CD8-positive, alpha-beta T cell (primary cell): ENCODE measurements at regions of chr1 and their contacts with region 1.

Region 1: DNA sequence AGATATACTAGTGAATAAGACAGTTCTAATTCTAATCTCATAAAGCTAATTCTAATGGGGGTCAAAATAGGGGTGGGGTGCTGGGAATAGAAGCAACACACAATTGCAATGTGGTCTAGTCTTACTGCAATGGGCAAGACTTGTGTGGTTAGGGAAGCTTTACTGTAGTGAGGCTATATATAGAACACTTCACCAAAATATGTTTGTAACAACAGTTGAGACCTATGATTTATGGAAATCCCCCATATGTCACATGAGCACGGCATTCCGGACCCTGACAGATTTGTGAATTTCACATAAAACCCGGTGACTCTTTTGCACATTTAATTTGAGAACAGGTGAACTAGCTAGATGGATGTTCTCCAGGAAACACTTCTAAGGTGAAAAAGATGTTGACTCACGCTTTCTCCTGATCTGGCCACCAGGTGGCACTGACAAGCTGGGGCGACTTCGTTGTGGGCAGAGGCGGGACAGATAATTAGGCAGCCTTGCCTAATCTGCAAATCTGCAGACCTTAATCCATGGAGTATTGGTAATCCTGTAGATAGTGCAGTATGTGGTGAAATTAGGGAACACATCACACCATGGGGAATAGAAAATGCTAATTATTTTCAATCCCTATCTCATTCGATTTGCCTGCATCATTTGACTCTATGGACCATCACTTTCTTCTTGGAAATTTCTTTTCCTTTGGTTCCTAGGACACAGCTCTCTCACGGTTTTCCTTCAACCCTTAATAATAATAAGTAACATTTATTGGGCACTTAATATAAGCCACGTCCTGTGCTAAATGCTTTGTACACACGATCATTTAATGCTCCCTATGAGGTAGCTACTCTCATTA is 37.7 kb downstream of the KIAA0040 start:
- DNase-seq: peak; percentile 60 to 88 (median 77)
- ATAC-seq: peak; percentile 65
- H3K4me3 ChIP-seq: no peak overlapping the region
- H3K4me3 Mint-ChIP-seq: no peak overlapping the region
- H3K27ac ChIP-seq: no peak overlapping the region
- H3K27ac Mint-ChIP-seq: no peak overlapping the region
- H3K4me1 ChIP-seq: peaks cover 13% of the 10 kb centered on the region
- H3K4me1 Mint-ChIP-seq: peaks cover 20% of the 10 kb centered on the region
- H3K27me3 ChIP-seq: peaks cover 0 to 6% of the 10 kb centered on the region in 2 experiments
- H3K27me3 Mint-ChIP-seq: peaks cover 26% of the 10 kb centered on the region
- CTCF ChIP-seq: peak; percentile 83

Region 2: DNA sequence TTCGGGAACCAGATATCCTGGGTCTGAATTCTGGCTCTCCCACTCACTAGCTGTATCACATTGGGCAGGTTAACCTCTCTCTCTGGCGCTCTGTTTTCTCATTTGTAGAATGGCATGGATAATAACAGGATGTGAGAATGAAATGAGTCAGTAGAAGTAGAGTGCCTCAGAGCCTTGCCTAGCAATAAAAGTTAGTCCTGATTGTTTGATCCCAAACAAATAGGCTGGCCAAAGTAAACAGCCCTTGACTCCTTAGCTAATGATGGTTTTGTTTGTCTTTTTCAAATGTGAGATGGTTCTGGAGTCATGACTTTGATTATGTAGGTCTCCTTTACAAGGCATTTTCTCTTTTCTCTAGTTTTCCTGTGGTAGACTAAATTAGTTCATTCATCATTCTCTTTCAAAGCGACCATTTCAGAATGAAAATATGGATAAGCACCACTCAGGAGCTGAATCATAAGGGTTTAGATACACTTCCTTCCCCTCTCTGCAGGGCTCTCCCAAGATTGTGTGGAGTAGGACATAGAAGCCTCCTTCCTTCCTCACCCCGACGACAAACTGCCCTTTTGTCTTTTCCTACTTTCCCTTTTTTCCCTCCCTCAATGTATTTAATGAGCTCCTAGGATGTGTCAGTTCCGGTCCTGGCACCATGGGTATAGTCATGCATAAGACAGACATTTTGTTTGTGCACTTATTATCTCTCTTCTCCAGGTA is 14.6 kb after region 1 on chr1:
- CTCF ChIA-PET with region 1: interaction called, 22 read pairs
- POLR2A ChIA-PET with region 1: interaction called, 3 read pairs
- intact Hi-C with region 1: no loop called
- DNase-seq: no peak
- ATAC-seq: no peak
- H3K4me3 ChIP-seq: no peak overlapping the region
- H3K4me3 Mint-ChIP-seq: no peak overlapping the region
- H3K27ac ChIP-seq: no peak overlapping the region
- H3K27ac Mint-ChIP-seq: peak overlapping the region; percentile 74
- H3K4me1 ChIP-seq: peaks cover 4% of the 10 kb centered on the region
- H3K4me1 Mint-ChIP-seq: peaks cover 69% of the 10 kb centered on the region
- H3K27me3 ChIP-seq: no peaks in the 10 kb centered on the region
- H3K27me3 Mint-ChIP-seq: no peaks in the 10 kb centered on the region
- CTCF ChIP-seq: no peak

Region 3: DNA sequence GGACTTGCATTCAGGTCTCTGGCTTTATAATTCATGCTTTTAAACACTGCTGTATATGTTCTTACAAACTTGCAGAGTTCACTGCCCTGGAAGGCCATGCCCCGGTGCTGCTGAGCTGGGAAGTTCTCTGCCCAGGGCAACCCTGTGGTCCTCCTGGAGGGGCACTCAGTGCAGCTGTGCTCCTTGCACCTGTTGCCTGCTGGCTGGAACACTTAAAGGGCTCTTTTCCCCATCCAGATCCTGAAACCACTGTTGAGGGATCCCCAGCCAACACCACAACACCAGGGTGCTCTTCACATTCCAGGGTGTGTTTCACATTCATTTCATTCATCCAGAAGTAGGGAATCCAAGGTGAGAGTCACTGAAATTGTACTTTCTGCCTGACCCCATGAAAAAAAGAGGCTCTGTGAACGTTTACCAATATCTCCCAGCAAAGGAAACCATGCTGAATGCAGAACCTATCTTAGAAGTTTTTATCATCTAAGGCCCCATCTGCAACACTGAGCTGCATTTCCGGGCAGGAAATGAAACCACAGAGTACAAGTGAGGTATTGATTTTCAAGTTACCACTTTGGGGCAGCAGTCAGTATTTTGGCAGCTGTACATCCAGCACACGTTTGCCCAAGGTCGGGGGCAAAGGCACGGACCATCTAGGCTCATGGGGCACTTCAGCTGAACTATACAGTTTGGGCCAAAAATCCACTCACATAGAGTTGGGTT is 54.1 kb after region 1 on chr1:
- CTCF ChIA-PET with region 1: interaction called, 16 read pairs
- POLR2A ChIA-PET with region 1: interaction called, 5 read pairs
- intact Hi-C with region 1: loop called in 1 of 2 experiments (anchors 5 kb)
- DNase-seq: peak; percentile 10 to 87 (median 61)
- ATAC-seq: peak; percentile 87
- H3K4me3 ChIP-seq: peak overlapping the region; percentile 26 to 36
- H3K4me3 Mint-ChIP-seq: peak overlapping the region; percentile 82
- H3K27ac ChIP-seq: peak overlapping the region; percentile 41 to 78
- H3K27ac Mint-ChIP-seq: peak overlapping the region; percentile 95
- H3K4me1 ChIP-seq: peaks cover 55% of the 10 kb centered on the region
- H3K4me1 Mint-ChIP-seq: peaks cover 77% of the 10 kb centered on the region
- H3K27me3 ChIP-seq: no peaks in the 10 kb centered on the region
- H3K27me3 Mint-ChIP-seq: no peaks in the 10 kb centered on the region
- CTCF ChIP-seq: no peak

Region 4: DNA sequence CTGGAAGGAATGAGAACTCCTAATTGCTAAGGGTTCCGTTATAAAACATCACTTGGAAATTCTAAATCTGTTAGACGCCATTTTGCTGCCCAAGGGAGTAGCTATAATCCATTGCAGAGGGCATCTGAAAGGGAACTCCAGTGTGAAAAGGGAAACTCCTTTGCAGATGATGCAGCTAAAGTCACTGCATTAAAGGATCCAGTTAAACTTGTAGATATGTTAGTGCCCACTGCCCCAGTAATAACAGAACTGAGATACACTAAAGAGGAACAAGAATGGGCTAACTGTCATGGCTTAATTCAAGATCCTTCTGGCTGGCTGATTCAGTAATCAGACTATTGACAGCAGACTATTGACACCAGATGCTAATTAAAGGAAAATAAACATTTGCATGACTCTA is 119.5 kb after region 1 on chr1:
- CTCF ChIA-PET with region 1: interaction called, 13 read pairs
- POLR2A ChIA-PET with region 1: no interaction called
- intact Hi-C with region 1: no loop called
- DNase-seq: no peak
- ATAC-seq: no peak
- H3K4me3 ChIP-seq: no peak overlapping the region
- H3K4me3 Mint-ChIP-seq: no peak overlapping the region
- H3K27ac ChIP-seq: no peak overlapping the region
- H3K27ac Mint-ChIP-seq: no peak overlapping the region
- H3K4me1 ChIP-seq: no peaks in the 10 kb centered on the region
- H3K4me1 Mint-ChIP-seq: no peaks in the 10 kb centered on the region
- H3K27me3 ChIP-seq: no peaks in the 10 kb centered on the region
- H3K27me3 Mint-ChIP-seq: peaks cover under 1% of the 10 kb centered on the region
- CTCF ChIP-seq: no peak

Region 5: GRCh38 chr1:175319418-175320230 is 164.8 kb after region 1 on chr1:
- CTCF ChIA-PET with region 1: interaction called, 432 read pairs
- POLR2A ChIA-PET with region 1: interaction called, 24 read pairs
- intact Hi-C with region 1: loop called (anchors 1 kb)
- DNase-seq: peak; percentile 45 to 83 (median 71)
- ATAC-seq: peak; percentile 86
- H3K4me3 ChIP-seq: no peak overlapping the region
- H3K4me3 Mint-ChIP-seq: no peak overlapping the region
- H3K27ac ChIP-seq: no peak overlapping the region
- H3K27ac Mint-ChIP-seq: no peak overlapping the region
- H3K4me1 ChIP-seq: peaks cover 6% of the 10 kb centered on the region
- H3K4me1 Mint-ChIP-seq: peaks cover 11% of the 10 kb centered on the region
- H3K27me3 ChIP-seq: no peaks in the 10 kb centered on the region
- H3K27me3 Mint-ChIP-seq: peaks cover 3% of the 10 kb centered on the region
- CTCF ChIP-seq: peak; percentile 86

Region 6: DNA sequence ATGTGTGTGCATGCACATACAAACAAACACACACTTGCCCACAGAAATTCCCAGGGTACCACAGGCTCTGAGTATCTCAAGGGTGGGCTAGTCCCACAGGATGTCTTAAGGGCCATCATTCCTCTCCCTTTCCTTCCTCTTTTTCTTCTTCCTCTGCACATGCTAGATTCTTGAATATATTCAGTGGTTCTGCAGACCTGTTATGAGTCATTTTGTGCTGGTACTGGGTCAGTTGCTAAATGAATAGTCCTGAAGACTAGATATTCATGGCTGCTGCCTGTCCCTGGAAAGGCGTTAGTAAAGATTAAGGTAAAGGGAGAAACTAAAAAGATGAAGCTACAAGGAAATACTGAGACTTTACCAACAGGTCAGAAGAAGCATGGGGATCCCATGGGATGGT is 294.5 kb after region 1 on chr1:
- CTCF ChIA-PET with region 1: no interaction called
- POLR2A ChIA-PET with region 1: no interaction called
- intact Hi-C with region 1: no loop called
- DNase-seq: no peak
- ATAC-seq: no peak
- H3K4me3 ChIP-seq: no peak overlapping the region
- H3K4me3 Mint-ChIP-seq: no peak overlapping the region
- H3K27ac ChIP-seq: no peak overlapping the region
- H3K27ac Mint-ChIP-seq: no peak overlapping the region
- H3K4me1 ChIP-seq: no peaks in the 10 kb centered on the region
- H3K4me1 Mint-ChIP-seq: no peaks in the 10 kb centered on the region
- H3K27me3 ChIP-seq: no peaks in the 10 kb centered on the region
- H3K27me3 Mint-ChIP-seq: peaks cover 5% of the 10 kb centered on the region
- CTCF ChIP-seq: no peak

Region 7: DNA sequence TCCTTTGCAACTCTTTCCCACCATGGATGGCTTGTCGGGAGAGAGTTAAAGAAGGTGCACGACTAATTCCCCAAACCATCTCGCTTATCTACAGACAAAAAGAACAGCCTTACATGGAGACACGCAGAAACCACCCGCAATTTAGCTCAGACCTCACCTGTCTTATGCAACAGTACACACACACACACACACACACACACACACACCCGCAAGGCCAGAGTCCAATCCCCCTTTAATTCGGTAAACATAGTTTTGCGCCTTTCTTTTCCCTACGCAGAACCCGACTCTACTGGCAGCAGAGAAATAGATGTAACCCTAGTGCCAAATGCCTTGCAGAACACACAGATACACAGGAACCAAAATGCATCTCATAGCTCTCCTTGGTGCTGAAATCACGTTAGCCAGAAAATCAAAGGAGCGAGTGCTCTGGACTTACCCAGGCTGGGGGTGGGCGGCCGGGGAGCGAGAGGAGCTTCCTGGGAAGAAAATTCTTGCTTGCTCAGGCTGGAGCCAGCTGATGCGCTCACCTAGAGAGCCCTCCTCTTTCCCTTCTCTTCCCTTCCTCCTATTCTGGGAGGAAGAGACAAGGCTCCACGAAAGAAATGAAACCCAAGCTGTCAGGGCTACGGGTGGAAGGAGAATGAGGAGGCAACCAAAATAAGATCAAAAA is 588.1 kb after region 1 on chr1:
- CTCF ChIA-PET with region 1: interaction called, 3 read pairs
- POLR2A ChIA-PET with region 1: no interaction called
- intact Hi-C with region 1: loop called (anchors 5 kb)
- DNase-seq: no peak
- ATAC-seq: no peak
- H3K4me3 ChIP-seq: no peak overlapping the region
- H3K4me3 Mint-ChIP-seq: no peak overlapping the region
- H3K27ac ChIP-seq: no peak overlapping the region
- H3K27ac Mint-ChIP-seq: no peak overlapping the region
- H3K4me1 ChIP-seq: no peaks in the 10 kb centered on the region
- H3K4me1 Mint-ChIP-seq: no peaks in the 10 kb centered on the region
- H3K27me3 ChIP-seq: peaks cover 5 to 6% of the 10 kb centered on the region in 2 experiments
- H3K27me3 Mint-ChIP-seq: peaks cover 26% of the 10 kb centered on the region
- CTCF ChIP-seq: no peak

Region 8: GRCh38 chr1:176880954-176881595 is 1726.2 kb after region 1 on chr1:
- CTCF ChIA-PET with region 1: no interaction called
- POLR2A ChIA-PET with region 1: no interaction called
- intact Hi-C with region 1: loop called in 1 of 2 experiments (anchors 5 kb)
- DNase-seq: peak in 5 of 9 experiments; percentile 4 to 30 (median 18)
- ATAC-seq: no peak
- H3K4me3 ChIP-seq: no peak overlapping the region
- H3K4me3 Mint-ChIP-seq: no peak overlapping the region
- H3K27ac ChIP-seq: no peak overlapping the region
- H3K27ac Mint-ChIP-seq: no peak overlapping the region
- H3K4me1 ChIP-seq: no peaks in the 10 kb centered on the region
- H3K4me1 Mint-ChIP-seq: no peaks in the 10 kb centered on the region
- H3K27me3 ChIP-seq: no peaks in the 10 kb centered on the region
- H3K27me3 Mint-ChIP-seq: no peaks in the 10 kb centered on the region
- CTCF ChIP-seq: no peak